Transverse colon (tissue), 4 donors: ENCODE measurements at regions of chrX and their contacts with region 1.

Region 1: GRCh38 chrX:15674841-15675489 is 10.4 kb upstream of the CLTRN start:
- DNase-seq: peak; percentile 97
- H3K4me3 ChIP-seq: peak overlapping the region; percentile 34 to 74 (median 64)
- H3K27ac ChIP-seq: peak overlapping the region; percentile 96 to 98 (median 96)
- H3K4me1 ChIP-seq: peaks cover 7 to 16% (median 11%) of the 10 kb centered on the region in 4 donors
- H3K27me3 ChIP-seq: no peaks in the 10 kb centered on the region
- CTCF ChIP-seq: no peak
- EP300 ChIP-seq: no peak
- POLR2A ChIP-seq: peak; percentile 83

Region 2: GRCh38 chrX:15335135-15336022 is 339.6 kb before region 1 on chrX and contains the start of gene PIGA:
- in situ Hi-C with region 1: loop called in 1 of 4 experiments (anchors 25 kb)
- intact Hi-C with region 1: no loop called
- DNase-seq: peak; percentile 95
- H3K4me3 ChIP-seq: peak within 1 kb of the TSS; percentile 54 to 89 (median 66)
- H3K27ac ChIP-seq: peak within 1 kb of the TSS; percentile 79 to 93 (median 88)
- H3K4me1 ChIP-seq: peaks cover 0 to 8% (median 2%) of the 10 kb centered on the region in 4 donors
- H3K27me3 ChIP-seq: no peaks in the 10 kb centered on the region
- CTCF ChIP-seq: no peak
- EP300 ChIP-seq: no peak
- POLR2A ChIP-seq: peak; percentile 96
- total RNA-seq, gene PIGA: 6.6 to 53.9 (median 12.7) TPM

Region 3: GRCh38 chrX:15564981-15565579 is 109.9 kb before region 1 on chrX:
- in situ Hi-C with region 1: loop called in 1 of 4 experiments (anchors 25 kb)
- intact Hi-C with region 1: no loop called
- DNase-seq: peak; percentile 69
- H3K4me3 ChIP-seq: no peak overlapping the region
- H3K27ac ChIP-seq: peak overlapping the region in 1 of 4 donors; percentile 31
- H3K4me1 ChIP-seq: peaks cover 0 to 5% (median 0%) of the 10 kb centered on the region in 4 donors
- H3K27me3 ChIP-seq: no peaks in the 10 kb centered on the region
- CTCF ChIP-seq: peak; percentile 35 to 53 (median 46)
- EP300 ChIP-seq: no peak
- POLR2A ChIP-seq: no peak

Region 4: GRCh38 chrX:15789979-15790768 is 115.2 kb after region 1 on chrX and contains the start of gene ZRSR2:
- in situ Hi-C with region 1: loop called in 1 of 4 experiments (anchors 25 kb)
- intact Hi-C with region 1: no loop called
- DNase-seq: peak; percentile 92
- H3K4me3 ChIP-seq: peak within 1 kb of the TSS; percentile 34 to 84 (median 65)
- H3K27ac ChIP-seq: peak within 1 kb of the TSS; percentile 87 to 92 (median 90)
- H3K4me1 ChIP-seq: peaks cover 0 to 12% (median 5%) of the 10 kb centered on the region in 4 donors
- H3K27me3 ChIP-seq: no peaks in the 10 kb centered on the region
- CTCF ChIP-seq: no peak
- EP300 ChIP-seq: no peak
- POLR2A ChIP-seq: peak; percentile 57
- total RNA-seq, gene ZRSR2: 5.3 to 263 (median 12.4) TPM in 3 of 4 donors, not detected in the other

Region 5: GRCh38 chrX:16695079-16695676 is 1020.2 kb after region 1 on chrX:
- in situ Hi-C with region 1: loop called in 1 of 4 experiments (anchors 25 kb)
- intact Hi-C with region 1: no loop called
- DNase-seq: peak; percentile 65
- H3K4me3 ChIP-seq: no peak overlapping the region
- H3K27ac ChIP-seq: no peak overlapping the region
- H3K4me1 ChIP-seq: no peaks in the 10 kb centered on the region
- H3K27me3 ChIP-seq: no peaks in the 10 kb centered on the region
- CTCF ChIP-seq: peak; percentile 66 to 90 (median 72)
- EP300 ChIP-seq: no peak
- POLR2A ChIP-seq: no peak